Activated CD4-positive, alpha-beta T cell treated with anti-CD3 and anti-CD28 coated beads for 36 hours (primary cell): ENCODE measurements at regions of chr14 and their contacts with region 1.

Region 1: DNA sequence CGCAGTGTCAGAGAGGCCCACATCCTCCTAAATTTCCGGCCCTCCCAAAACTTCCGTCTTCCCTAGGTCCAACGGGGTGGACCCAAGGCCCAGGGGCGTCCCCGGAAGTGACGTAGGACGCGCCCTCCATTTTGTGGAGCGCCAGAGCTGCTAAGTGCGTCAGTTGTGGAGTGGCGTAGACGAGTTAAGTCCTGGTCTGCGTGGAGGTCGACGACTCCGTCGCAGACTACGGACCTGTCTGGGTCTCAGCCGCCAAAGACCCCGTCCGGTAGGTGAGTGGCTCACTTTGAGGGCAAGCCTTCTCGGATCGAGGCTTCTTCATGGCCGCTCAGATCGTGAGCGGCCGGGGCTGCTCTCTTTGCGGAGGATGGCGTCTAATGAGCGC is at the start of gene SRSF5:
- DNase-seq: peak; percentile 96
- ATAC-seq: peak; percentile 76
- H3K4me3 Mint-ChIP-seq: peak within 1 kb of the TSS; percentile 96
- H3K27ac Mint-ChIP-seq: peak within 1 kb of the TSS; percentile 99
- H3K4me1 Mint-ChIP-seq: peaks cover 77% of the 10 kb centered on the region
- H3K27me3 Mint-ChIP-seq: no peaks in the 10 kb centered on the region
- total RNA-seq, gene SRSF5: 265 to 319 TPM

Region 2: GRCh38 chr14:67816326-67817002 is 1950.5 kb before region 1 on chr14 and contains the start of gene ZFYVE26:
- CTCF ChIA-PET with region 1: no interaction called
- POLR2A ChIA-PET with region 1: no interaction called
- intact Hi-C with region 1: loop called in 1 of 2 experiments (anchors 5 kb)
- DNase-seq: peak; percentile 95
- ATAC-seq: peak; percentile 89
- H3K4me3 Mint-ChIP-seq: peak within 1 kb of the TSS; percentile 89
- H3K27ac Mint-ChIP-seq: peak within 1 kb of the TSS; percentile 92
- H3K4me1 Mint-ChIP-seq: peaks cover 45% of the 10 kb centered on the region
- H3K27me3 Mint-ChIP-seq: no peaks in the 10 kb centered on the region
- total RNA-seq, gene ZFYVE26: 13.0 to 14.2 TPM

Region 3: GRCh38 chr14:69153131-69153872 is 613.7 kb before region 1 on chr14:
- CTCF ChIA-PET with region 1: no interaction called
- POLR2A ChIA-PET with region 1: no interaction called
- intact Hi-C with region 1: loop called in 1 of 2 experiments (anchors 1 kb)
- DNase-seq: peak; percentile 96
- ATAC-seq: peak; percentile 93
- H3K4me3 Mint-ChIP-seq: peak overlapping the region; percentile 83
- H3K27ac Mint-ChIP-seq: peak overlapping the region; percentile 81
- H3K4me1 Mint-ChIP-seq: peaks cover 30% of the 10 kb centered on the region
- H3K27me3 Mint-ChIP-seq: no peaks in the 10 kb centered on the region

Region 4: DNA sequence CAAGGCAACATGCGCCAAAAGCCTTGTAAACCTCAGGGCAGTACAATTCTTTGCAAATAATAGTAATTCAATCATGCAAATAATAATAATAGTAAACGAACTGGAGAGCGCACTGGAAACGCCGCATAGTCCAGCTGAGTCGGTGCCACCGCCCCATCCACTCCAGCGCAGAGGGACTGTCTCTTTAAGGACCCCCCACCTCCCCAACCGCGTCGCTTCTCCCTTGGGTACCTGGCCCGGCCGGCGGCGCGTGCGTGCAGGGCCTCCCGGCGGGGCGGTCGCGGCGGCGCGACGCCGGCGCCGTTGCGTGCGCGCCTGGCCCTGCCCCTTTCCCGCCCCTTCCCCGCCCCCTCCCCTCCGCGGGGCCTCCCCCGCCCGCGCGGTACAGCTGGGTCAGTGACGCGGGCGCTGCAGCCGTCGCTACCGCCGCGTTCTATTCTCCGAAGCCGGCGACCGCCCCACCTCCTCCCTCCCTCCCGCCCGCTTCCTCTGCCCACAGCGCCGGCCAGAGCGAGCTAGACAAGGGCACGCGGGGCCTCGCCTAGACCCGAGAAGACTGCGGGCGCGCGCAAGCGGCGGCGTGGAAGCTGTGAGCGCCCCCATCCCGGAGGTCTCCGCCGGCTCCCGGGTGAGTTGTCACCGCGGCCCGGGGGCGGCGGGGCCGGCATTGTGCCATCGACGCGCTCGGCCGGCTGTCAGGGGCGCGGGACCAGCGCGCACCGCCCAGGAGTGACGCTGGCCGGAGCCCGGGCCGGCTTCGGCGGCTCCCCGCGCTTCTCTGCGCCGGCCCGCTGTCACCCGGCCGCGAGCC is 155.6 kb before region 1 on chr14 and contains the start of gene SUSD6:
- CTCF ChIA-PET with region 1: no interaction called
- POLR2A ChIA-PET with region 1: no interaction called
- intact Hi-C with region 1: loop called (anchors 1 to 5 kb)
- DNase-seq: peak; percentile 95
- ATAC-seq: peak; percentile 74
- H3K4me3 Mint-ChIP-seq: peak within 1 kb of the TSS; percentile 87
- H3K27ac Mint-ChIP-seq: peak within 1 kb of the TSS; percentile 99
- H3K4me1 Mint-ChIP-seq: peaks cover 48% of the 10 kb centered on the region
- H3K27me3 Mint-ChIP-seq: no peaks in the 10 kb centered on the region
- total RNA-seq, gene SUSD6: 57.9 to 59.3 TPM

Region 5: DNA sequence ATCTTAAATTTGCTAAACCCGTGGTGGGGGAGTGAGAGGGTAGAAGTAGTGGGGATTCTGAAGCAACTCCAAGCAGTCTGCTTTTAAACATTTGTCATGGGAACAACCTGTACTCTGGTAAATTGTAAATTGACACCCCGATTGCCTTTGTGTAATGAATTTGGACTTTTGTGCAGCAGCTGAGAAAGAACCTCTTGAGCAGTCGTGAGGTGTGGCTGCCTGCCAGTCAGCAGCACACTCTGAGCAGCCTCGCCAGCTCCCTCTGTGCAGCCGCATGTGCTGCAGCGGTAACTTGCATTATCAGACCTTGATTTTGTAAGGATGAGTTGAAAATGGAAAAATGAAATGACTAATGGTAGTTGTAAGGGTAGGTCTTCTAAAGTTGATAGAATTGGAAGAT is 81.3 kb before region 1 on chr14:
- CTCF ChIA-PET with region 1: no interaction called
- POLR2A ChIA-PET with region 1: interaction called, 3 read pairs
- intact Hi-C with region 1: loop called in 1 of 2 experiments (anchors 2 kb)
- DNase-seq: peak; percentile 78
- ATAC-seq: peak; percentile 74
- H3K4me3 Mint-ChIP-seq: peak overlapping the region; percentile 49
- H3K27ac Mint-ChIP-seq: peak overlapping the region; percentile 94
- H3K4me1 Mint-ChIP-seq: peaks cover 81% of the 10 kb centered on the region
- H3K27me3 Mint-ChIP-seq: no peaks in the 10 kb centered on the region

Region 6: DNA sequence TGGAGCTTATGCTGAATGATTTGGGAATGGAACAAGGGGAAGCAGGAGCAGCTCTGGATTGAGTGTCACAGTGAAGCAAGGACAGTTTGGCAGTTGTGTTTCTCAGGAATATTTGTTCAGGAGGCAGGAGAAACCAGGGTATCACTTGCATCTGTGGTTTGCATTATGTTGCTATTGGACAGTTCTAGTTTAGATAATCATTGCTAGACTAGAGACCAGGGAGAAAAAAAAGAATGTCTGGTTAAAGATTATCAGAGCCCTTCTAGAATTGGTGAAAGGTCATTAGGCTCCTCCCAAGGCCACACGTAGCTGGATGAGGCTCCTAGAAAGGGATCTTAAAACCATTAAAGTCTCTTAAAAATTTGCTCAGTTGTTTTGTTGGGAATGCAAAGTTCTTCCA is 17.0 kb before region 1 on chr14:
- CTCF ChIA-PET with region 1: interaction called, 3 read pairs
- POLR2A ChIA-PET with region 1: interaction called, 12 read pairs
- intact Hi-C with region 1: loop called in 1 of 2 experiments (anchors 1 kb)
- DNase-seq: no peak
- ATAC-seq: no peak
- H3K4me3 Mint-ChIP-seq: no peak overlapping the region
- H3K27ac Mint-ChIP-seq: no peak overlapping the region
- H3K4me1 Mint-ChIP-seq: peaks cover 11% of the 10 kb centered on the region
- H3K27me3 Mint-ChIP-seq: no peaks in the 10 kb centered on the region

Region 7: DNA sequence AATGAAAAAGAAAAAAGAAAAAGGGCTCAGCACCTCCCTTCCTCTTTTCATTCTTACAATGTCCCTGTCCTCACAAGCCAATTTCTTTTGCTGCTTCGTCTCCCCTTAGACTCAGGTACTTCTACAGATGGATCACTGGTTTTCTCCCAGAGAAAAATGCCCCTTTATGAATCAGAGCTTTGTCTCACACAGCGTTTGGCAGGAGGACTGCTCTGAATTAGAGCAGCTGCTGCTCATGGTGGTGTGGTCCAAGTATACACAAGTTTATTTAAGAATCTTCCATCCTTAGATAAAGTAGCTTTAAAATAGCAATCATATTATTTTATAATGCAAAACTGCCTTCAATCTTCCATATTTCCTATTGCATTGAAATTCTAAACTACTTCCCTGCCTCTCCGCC is 341.4 kb after region 1 on chr14:
- CTCF ChIA-PET with region 1: no interaction called
- POLR2A ChIA-PET with region 1: no interaction called
- intact Hi-C with region 1: no loop called
- DNase-seq: no peak
- ATAC-seq: no peak
- H3K4me3 Mint-ChIP-seq: no peak overlapping the region
- H3K27ac Mint-ChIP-seq: no peak overlapping the region
- H3K4me1 Mint-ChIP-seq: no peaks in the 10 kb centered on the region
- H3K27me3 Mint-ChIP-seq: peaks cover 14% of the 10 kb centered on the region

Region 8: GRCh38 chr14:70809543-70810244 is 1042.7 kb after region 1 on chr14:
- CTCF ChIA-PET with region 1: no interaction called
- POLR2A ChIA-PET with region 1: no interaction called
- intact Hi-C with region 1: loop called in 1 of 2 experiments (anchors 2 kb)
- DNase-seq: peak; percentile 96
- ATAC-seq: peak; percentile 87
- H3K4me3 Mint-ChIP-seq: no peak overlapping the region
- H3K27ac Mint-ChIP-seq: peak overlapping the region; percentile 20
- H3K4me1 Mint-ChIP-seq: peaks cover 4% of the 10 kb centered on the region
- H3K27me3 Mint-ChIP-seq: no peaks in the 10 kb centered on the region